ENCODE measurements at regions of chr12 and their contacts with region 1.

Region 1: DNA sequence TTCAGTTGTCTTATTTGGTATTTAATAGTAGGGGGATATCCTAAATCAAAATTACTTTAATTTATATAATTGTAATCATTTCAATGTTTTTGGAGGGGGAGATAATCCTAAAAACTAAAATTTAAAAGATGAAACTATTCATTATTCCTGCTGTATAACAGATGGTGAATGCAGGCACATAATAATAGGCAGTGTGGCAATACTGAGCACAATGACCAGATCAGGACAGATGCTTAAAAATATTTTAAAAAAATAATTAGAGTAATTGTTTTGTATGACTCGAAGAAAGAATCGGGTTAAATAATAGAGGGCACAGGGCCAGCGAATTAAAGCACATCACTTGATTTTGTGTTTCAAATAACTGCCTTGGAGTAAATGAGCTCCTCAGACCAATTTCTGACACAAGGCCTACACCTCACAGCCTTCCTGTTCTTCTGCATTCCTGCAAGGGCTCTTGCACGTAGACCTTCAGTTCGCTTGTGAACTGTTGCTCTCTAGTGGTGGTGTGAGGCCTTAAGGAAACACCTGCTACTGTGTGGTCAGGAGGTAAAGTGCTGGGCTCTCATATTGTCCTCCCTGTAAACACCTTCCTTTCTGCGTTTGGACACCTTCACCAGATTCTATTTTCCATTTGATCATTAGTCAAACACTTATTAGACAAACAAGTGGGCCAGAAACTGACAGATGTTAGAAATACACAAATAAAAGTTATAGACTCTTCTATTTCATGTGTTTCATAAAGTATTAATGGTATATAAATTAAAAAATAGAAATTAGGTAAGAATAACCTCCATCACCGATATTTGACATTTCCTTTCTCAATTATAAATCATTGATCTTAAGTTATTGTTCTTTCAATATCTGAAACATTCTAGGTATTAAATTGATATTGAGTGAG is 29.3 kb upstream of the KLRF1 start:
- DNase-seq: no peak
- ATAC-seq: peak in 3 of 4 donors; percentile 48 to 67 (median 58)
- H3K4me3 ChIP-seq: no peak overlapping the region
- H3K27ac ChIP-seq: no peak overlapping the region
- H3K4me1 ChIP-seq: no peaks in the 10 kb centered on the region
- H3K27me3 ChIP-seq: no peaks in the 10 kb centered on the region
- CTCF ChIP-seq: peak; percentile 38

Region 2: DNA sequence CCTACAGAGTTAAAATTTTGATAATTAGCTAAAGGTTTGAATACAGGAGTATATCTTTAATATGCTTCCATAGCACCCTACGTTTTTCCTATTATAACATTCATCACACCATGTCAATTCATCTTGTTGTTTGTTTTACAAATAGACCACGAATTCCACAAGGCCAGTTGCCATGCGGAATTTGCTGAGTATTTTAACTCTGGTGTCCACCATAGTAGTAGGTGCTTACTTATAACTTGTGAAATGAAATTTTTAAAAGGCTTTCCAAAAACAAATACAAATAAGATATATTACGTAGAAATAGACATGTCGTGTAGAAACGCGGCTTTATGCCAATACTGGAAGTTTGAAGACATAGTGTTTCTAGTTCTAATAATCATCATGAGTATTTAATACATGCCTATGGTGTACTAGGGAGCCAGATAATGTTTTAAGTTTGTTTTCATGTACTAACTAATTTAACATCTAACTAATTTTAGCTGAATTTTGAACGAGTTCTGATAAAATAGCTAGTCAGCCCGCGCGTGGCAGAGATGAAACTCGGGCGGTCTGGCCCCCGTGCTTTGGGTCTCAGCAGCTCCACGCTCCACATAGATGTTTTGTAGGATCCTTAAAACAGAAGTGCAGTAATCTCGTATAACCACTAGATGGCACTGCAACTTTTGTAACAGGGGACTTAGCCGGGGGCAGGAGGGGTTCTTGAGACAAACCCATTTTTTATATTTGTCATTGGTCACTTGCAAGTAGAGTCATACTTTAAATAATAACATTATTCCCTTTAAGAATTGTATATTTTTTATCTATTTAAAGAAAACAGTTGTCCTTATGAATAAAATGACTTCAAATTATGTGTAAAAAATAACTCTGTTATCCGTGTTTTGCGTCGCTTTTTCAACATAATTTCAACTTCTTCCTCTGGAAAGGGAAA is 47.4 kb before region 1 on chr12:
- intact Hi-C with region 1: loop called in 1 of 2 experiments (anchors 5 kb)
- DNase-seq: no peak
- ATAC-seq: peak; percentile 75 to 95 (median 78)
- H3K4me3 ChIP-seq: peak overlapping the region; percentile 47
- H3K27ac ChIP-seq: no peak overlapping the region
- H3K4me1 ChIP-seq: peaks cover 6% of the 10 kb centered on the region
- H3K27me3 ChIP-seq: no peaks in the 10 kb centered on the region
- CTCF ChIP-seq: peak; percentile 83

Region 3: DNA sequence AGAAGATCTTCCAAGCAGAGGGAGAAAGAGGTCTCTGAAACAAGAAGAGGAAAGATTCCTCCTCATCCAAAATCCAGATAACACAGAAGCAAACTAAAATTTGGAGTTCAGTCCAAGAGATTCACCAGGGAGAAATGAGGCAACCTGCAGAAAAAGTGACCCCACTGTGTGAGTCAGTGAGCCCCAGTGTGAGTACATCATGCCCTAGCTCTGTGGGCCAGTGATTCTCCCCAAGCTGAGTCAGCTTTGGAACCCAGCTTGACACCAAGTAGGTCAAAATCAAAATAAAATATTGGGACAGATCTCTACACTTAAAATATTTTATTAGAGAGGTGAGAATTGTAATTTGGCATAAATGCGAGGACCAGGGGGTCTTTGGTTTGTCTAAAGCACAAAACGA is 54.0 kb after region 1 on chr12:
- intact Hi-C with region 1: no loop called
- DNase-seq: no peak
- ATAC-seq: no peak
- H3K4me3 ChIP-seq: no peak overlapping the region
- H3K27ac ChIP-seq: no peak overlapping the region
- H3K4me1 ChIP-seq: no peaks in the 10 kb centered on the region
- H3K27me3 ChIP-seq: no peaks in the 10 kb centered on the region
- CTCF ChIP-seq: no peak

Measured in psoas muscle (tissue), 8 donors.